Transverse colon (tissue), 4 donors: ENCODE measurements at regions of chr4 and their contacts with region 1.

Region 1: DNA sequence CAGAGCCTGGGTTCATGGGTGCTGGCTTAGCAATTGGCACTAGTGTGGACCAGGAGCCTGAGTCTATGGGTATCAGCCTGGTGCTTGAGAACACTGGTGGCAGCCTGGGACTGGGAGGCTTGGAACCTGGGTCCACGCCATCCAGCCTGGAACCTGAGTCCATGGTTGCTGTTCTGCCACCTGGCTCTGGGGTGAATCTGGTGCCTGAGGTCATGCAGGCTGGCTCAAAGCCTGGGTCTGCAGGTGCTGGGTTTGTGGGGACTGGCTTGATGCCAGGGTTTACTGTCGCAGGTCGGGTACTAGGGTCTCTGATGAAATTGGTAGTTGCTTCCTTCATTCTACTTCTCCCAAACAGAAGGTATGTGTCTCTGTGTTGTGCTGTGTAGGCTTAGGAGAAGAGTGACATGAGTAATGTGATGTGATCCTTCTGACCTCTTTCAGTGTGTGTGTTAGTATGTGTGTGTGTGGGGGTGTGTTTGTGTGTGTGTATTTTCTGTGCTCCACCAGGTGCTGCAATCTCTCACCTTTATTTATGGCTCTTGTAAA is 517.0 kb upstream of the EPHA5 start:
- DNase-seq: no peak
- H3K4me3 ChIP-seq: no peak overlapping the region
- H3K27ac ChIP-seq: no peak overlapping the region
- H3K4me1 ChIP-seq: no peaks in the 10 kb centered on the region
- H3K27me3 ChIP-seq: no peaks in the 10 kb centered on the region
- CTCF ChIP-seq: no peak
- EP300 ChIP-seq: no peak
- POLR2A ChIP-seq: no peak

Region 2: DNA sequence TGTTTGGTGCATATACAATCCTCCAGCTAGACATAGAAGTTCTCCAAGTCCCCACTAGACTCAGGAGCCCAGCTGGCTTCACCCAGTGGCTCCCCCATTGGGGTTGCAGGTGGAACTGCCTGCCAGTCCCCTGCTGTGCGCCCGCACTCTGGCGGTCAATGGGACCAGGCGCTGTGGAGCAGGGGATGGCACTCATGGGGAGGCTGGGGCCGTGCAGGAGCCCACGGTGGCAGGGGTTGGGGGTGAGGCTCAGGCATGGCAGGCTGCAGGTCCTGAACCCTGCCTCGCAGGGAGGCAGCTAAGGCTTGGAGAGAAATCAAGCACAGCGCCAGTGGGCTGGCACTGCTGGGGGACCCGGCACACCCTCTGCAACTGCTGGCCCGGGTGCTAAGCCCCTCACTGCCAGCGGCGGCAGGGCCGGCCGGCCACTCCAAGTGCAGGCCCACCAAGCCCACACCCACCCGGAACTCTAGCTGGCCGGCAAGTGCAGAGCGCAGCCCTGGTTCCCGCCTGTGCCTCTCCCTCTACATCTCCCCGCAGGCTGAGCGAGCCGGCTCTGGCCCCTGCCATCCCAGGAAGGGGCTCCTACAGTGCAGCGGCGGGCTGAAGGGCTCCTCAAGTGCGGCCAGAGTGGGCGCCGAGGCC is 1709.3 kb after region 1 on chr4:
- in situ Hi-C with region 1: no loop called
- intact Hi-C with region 1: loop called (anchors 5 kb)
- DNase-seq: no peak
- H3K4me3 ChIP-seq: no peak overlapping the region
- H3K27ac ChIP-seq: no peak overlapping the region
- H3K4me1 ChIP-seq: no peaks in the 10 kb centered on the region
- H3K27me3 ChIP-seq: no peaks in the 10 kb centered on the region
- CTCF ChIP-seq: no peak
- EP300 ChIP-seq: no peak
- POLR2A ChIP-seq: no peak